GM12878 (cell line): ENCODE measurements at regions of chr1 and their contacts with region 1.

Region 1: DNA sequence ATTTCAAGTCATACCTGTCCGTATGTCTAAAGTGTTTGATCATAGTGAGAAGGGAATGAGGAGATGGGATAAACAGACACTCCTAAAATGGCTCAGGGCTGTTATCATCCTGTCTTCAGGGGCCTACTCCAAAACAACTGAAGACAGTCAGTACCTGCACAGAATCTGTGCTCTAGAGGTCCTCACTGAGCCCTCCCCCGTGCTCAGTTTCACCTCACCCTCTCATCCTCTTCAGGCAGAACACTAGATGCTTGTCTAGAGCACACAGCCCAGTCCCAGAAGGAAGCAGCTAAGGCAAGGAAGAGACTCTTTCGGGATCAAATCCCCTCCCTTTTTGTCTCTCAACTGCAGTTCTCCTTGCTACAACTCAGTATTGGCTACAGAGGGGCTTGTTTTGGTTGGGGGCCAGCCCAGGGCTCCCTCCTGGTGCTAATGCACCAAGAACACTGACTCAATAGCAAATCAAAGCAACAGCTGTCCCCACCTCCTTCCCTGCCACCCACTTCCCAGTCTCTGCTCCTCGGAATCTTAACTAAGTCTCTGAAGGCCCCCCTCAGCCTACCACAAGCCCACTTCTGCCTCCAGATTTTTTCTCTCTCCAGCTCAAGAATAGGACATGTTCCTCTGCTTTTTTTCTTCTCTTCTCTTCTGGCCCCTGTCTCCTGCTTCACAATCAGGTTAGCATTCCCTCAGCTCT is 10.1 kb downstream of the CADM3 start:
- DNase-seq: no peak
- ATAC-seq: no peak
- H3K4me3 ChIP-seq: no peak overlapping the region
- H3K27ac ChIP-seq: no peak overlapping the region
- H3K4me1 ChIP-seq: no peaks in the 10 kb centered on the region
- H3K27me3 ChIP-seq: peaks cover 0 to 2% of the 10 kb centered on the region in 2 experiments; a peak in 1 of 4 replicates
- CTCF ChIP-seq: no peak
- EP300 ChIP-seq: no peak
- POLR2A ChIP-seq: no peak
- RAD21 ChIP-seq: no peak

Region 2: GRCh38 chr1:159132271-159132881 is 49.1 kb before region 1 on chr1:
- CTCF ChIA-PET with region 1: no interaction called
- POLR2A ChIA-PET with region 1: no interaction called
- RAD21 ChIA-PET with region 1: no interaction called
- SMC1A ChIA-PET with region 1: no interaction called
- in situ Hi-C with region 1: no loop called
- intact Hi-C with region 1: no loop called
- DNase-seq: no peak
- ATAC-seq: peak; percentile 75
- H3K4me3 ChIP-seq: no peak overlapping the region
- H3K27ac ChIP-seq: no peak overlapping the region
- H3K4me1 ChIP-seq: no peaks in the 10 kb centered on the region
- H3K27me3 ChIP-seq: no peaks in the 10 kb centered on the region
- CTCF ChIP-seq: peak; percentile 79 to 90 (median 87)
- EP300 ChIP-seq: no peak
- POLR2A ChIP-seq: no peak
- RAD21 ChIP-seq: peak; percentile 82

Region 3: GRCh38 chr1:159197561-159198557 is 16.4 kb after region 1 on chr1:
- CTCF ChIA-PET with region 1: interaction called, 21 read pairs
- POLR2A ChIA-PET with region 1: no interaction called
- RAD21 ChIA-PET with region 1: no interaction called
- SMC1A ChIA-PET with region 1: no interaction called
- in situ Hi-C with region 1: no loop called
- intact Hi-C with region 1: no loop called
- DNase-seq: no peak
- ATAC-seq: peak; percentile 96
- H3K4me3 ChIP-seq: no peak overlapping the region
- H3K27ac ChIP-seq: no peak overlapping the region
- H3K4me1 ChIP-seq: no peaks in the 10 kb centered on the region
- H3K27me3 ChIP-seq: peaks cover 0 to 2% of the 10 kb centered on the region in 2 experiments; a peak in 2 of 4 replicates
- CTCF ChIP-seq: peak; percentile 83 to 90 (median 88)
- EP300 ChIP-seq: no peak
- POLR2A ChIP-seq: no peak
- RAD21 ChIP-seq: peak; percentile 65